PC-3 (cell line): ENCODE measurements at regions of chr1 and their contacts with region 1.

Region 1: GRCh38 chr1:47313915-47314664 is at the start of gene STIL:
- DNase-seq: peak; percentile 99
- ATAC-seq: peak; percentile 96
- H3K4me3 ChIP-seq: peak within 1 kb of the TSS; percentile 98
- H3K27ac ChIP-seq: peak within 1 kb of the TSS; percentile 72
- H3K4me1 ChIP-seq: peaks cover 14% of the 10 kb centered on the region
- H3K27me3 ChIP-seq: no peaks in the 10 kb centered on the region
- CTCF ChIP-seq: no peak
- total RNA-seq, gene STIL: 26.2 and 32.0 TPM in 2 replicates

Region 2: GRCh38 chr1:47276850-47277249 is 37.2 kb before region 1 on chr1:
- CTCF ChIA-PET with region 1: no interaction called
- POLR2A ChIA-PET with region 1: no interaction called
- intact Hi-C with region 1: no loop called
- DNase-seq: no peak
- ATAC-seq: no peak
- H3K4me3 ChIP-seq: no peak overlapping the region
- H3K27ac ChIP-seq: no peak overlapping the region
- H3K4me1 ChIP-seq: no peaks in the 10 kb centered on the region
- H3K27me3 ChIP-seq: no peaks in the 10 kb centered on the region
- CTCF ChIP-seq: no peak

Region 3: GRCh38 chr1:47333922-47334764 is 20.1 kb after region 1 on chr1:
- CTCF ChIA-PET with region 1: interaction called, 4 read pairs
- POLR2A ChIA-PET with region 1: interaction called, 6 read pairs
- intact Hi-C with region 1: loop called (anchors 1 kb)
- DNase-seq: peak; percentile 81
- ATAC-seq: peak; percentile 86
- H3K4me3 ChIP-seq: peak overlapping the region; percentile 90
- H3K27ac ChIP-seq: peak overlapping the region; percentile 57
- H3K4me1 ChIP-seq: peaks cover 11% of the 10 kb centered on the region
- H3K27me3 ChIP-seq: no peaks in the 10 kb centered on the region
- CTCF ChIP-seq: no peak